Naive thymus-derived CD4-positive, alpha-beta T cell (primary cell): ENCODE measurements at regions of chr11 and their contacts with region 1.

Region 1: GRCh38 chr11:111766093-111766833 is at the start of gene PPP2R1B:
- DNase-seq: peak; percentile 50 to 78 (median 69)
- ATAC-seq: peak; percentile 98
- H3K4me3 ChIP-seq: peak within 1 kb of the TSS; percentile 95
- H3K4me3 Mint-ChIP-seq: peak within 1 kb of the TSS; percentile 94 to 100 (median 98)
- H3K27ac ChIP-seq: peak within 1 kb of the TSS; percentile 86
- H3K27ac Mint-ChIP-seq: peak within 1 kb of the TSS; percentile 83 to 99 (median 95)
- H3K4me1 ChIP-seq: peaks cover 7% of the 10 kb centered on the region in 2 donors
- H3K4me1 Mint-ChIP-seq: peaks cover 25 to 48% (median 38%) of the 10 kb centered on the region in 7 donors
- H3K27me3 ChIP-seq: no peaks in the 10 kb centered on the region
- H3K27me3 Mint-ChIP-seq: no peaks in the 10 kb centered on the region
- total RNA-seq, gene PPP2R1B: 25.8 to 49.2 (median 34.0) TPM

Region 2: GRCh38 chr11:111777094-111778046 is 11.1 kb after region 1 on chr11:
- CTCF ChIA-PET with region 1: interaction called, 31 read pairs
- POLR2A ChIA-PET with region 1: interaction called, 5 read pairs
- intact Hi-C with region 1: loop called in 1 of 2 experiments (anchors 1 kb)
- DNase-seq: peak in 7 of 9 donors; percentile 43 to 71 (median 57)
- ATAC-seq: peak; percentile 89
- H3K4me3 ChIP-seq: no peak overlapping the region
- H3K4me3 Mint-ChIP-seq: no peak overlapping the region
- H3K27ac ChIP-seq: no peak overlapping the region
- H3K27ac Mint-ChIP-seq: no peak overlapping the region
- H3K4me1 ChIP-seq: no peaks in the 10 kb centered on the region
- H3K4me1 Mint-ChIP-seq: no peaks in the 10 kb centered on the region
- H3K27me3 ChIP-seq: no peaks in the 10 kb centered on the region
- H3K27me3 Mint-ChIP-seq: no peaks in the 10 kb centered on the region

Region 3: DNA sequence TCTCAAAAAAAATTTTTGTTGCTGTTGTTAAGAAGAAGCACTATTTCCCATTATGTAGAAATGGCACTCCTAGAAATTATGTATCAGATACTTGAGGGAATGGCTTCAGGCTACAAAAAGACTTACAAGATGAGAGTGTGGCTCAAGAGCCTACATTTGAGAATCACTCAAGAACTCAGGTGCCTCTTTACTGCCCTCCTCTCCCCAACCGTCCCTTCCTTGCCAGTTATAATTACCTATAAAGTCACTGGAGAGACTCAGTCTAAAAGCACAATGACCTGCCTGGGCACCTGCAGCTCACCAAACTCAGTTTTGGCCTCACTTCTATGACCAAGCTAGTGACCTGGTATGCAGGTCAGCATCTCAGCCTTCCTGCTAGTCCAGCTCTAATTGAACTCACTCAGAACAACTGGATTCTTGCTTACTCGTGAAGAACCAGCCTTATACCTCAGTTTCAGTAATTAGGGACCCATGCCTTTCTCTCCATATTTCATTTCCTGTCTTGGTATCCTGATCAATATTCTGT is 41.9 kb after region 1 on chr11:
- CTCF ChIA-PET with region 1: no interaction called
- POLR2A ChIA-PET with region 1: no interaction called
- intact Hi-C with region 1: no loop called
- DNase-seq: no peak
- ATAC-seq: no peak
- H3K4me3 ChIP-seq: no peak overlapping the region
- H3K4me3 Mint-ChIP-seq: no peak overlapping the region
- H3K27ac ChIP-seq: no peak overlapping the region
- H3K27ac Mint-ChIP-seq: peak overlapping the region in 3 of 9 donors; percentile 19 to 66 (median 48)
- H3K4me1 ChIP-seq: no peaks in the 10 kb centered on the region
- H3K4me1 Mint-ChIP-seq: peaks cover 0 to 6% (median 0%) of the 10 kb centered on the region in 7 donors
- H3K27me3 ChIP-seq: no peaks in the 10 kb centered on the region
- H3K27me3 Mint-ChIP-seq: no peaks in the 10 kb centered on the region

Region 4: DNA sequence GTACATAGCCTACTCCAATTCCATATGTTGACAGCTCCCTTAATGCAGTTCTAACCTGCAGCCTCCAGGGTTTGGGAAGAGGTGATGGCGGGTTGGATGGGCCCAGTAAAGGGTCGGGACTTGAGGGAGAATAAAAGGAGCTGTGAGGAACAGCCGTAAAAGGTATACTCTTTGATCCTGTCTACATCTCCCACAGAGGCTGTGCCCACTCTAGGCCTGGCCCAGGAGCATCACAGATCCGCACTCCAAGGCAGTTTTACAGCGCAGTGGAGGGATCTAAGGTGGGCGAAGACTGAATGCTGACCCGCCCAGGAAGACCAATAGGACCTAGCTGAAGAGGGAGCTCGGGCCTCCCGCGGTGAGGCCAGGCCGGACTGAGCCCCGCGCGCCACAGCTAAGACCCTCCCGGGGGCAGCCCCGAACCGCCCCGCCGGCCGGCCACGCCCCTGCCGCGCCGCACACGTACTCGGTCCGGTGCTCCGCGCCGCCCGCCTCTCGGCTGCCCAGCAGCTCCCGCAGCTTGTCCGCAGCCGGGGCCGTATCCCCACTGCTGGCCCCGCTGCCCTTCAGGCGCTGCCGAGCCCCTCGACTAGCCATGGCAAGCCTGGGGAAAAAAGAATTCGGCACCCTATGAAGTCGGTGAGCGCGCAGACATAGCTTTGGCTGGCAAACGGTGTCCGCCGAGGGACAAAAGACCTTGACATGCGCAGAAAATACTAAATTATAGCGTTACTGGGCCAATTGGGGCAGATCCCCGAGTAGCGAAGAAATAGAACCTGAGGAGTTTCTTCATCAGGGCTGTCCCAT is 104.8 kb after region 1 on chr11 and contains the start of gene ALG9:
- CTCF ChIA-PET with region 1: no interaction called
- POLR2A ChIA-PET with region 1: interaction called, 5 read pairs
- intact Hi-C with region 1: loop called (anchors 2 kb)
- DNase-seq: peak; percentile 79 to 94 (median 88)
- ATAC-seq: peak; percentile 91
- H3K4me3 ChIP-seq: peak within 1 kb of the TSS; percentile 74
- H3K4me3 Mint-ChIP-seq: peak within 1 kb of the TSS; percentile 86 to 96 (median 93)
- H3K27ac ChIP-seq: peak within 1 kb of the TSS; percentile 91
- H3K27ac Mint-ChIP-seq: peak within 1 kb of the TSS; percentile 87 to 98 (median 94)
- H3K4me1 ChIP-seq: peaks cover 8 to 10% of the 10 kb centered on the region in 2 donors
- H3K4me1 Mint-ChIP-seq: peaks cover 9 to 41% (median 34%) of the 10 kb centered on the region in 7 donors
- H3K27me3 ChIP-seq: no peaks in the 10 kb centered on the region
- H3K27me3 Mint-ChIP-seq: no peaks in the 10 kb centered on the region
- total RNA-seq, gene ALG9: 16.4 to 30.2 (median 29.2) TPM

Region 5: DNA sequence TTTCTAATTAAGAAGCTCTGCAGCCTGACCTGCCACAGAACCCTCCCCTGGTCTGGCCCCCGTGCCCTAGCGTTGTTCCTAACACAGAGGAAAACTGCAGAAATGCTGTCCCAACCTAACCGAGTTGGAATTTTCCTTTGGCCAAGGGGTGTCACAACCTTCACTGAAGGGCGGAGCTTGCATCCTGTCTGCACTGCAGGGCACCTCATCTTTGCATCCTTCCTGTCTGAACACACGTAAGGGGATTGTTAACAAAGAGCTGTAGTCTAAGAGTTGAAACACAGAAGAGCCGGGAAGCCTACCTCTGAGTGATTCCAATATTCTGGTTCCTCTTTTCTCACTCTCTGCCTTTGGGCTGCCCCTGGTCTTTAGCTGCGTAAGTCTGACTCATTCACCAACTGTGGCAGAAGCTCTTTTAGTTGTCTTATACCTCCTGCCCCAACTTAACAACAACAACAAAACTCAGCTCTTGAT is 172.5 kb after region 1 on chr11:
- CTCF ChIA-PET with region 1: no interaction called
- POLR2A ChIA-PET with region 1: no interaction called
- intact Hi-C with region 1: loop called in 1 of 2 experiments (anchors 5 kb)
- DNase-seq: peak in 6 of 9 donors; percentile 18 to 38 (median 27)
- ATAC-seq: peak; percentile 73
- H3K4me3 ChIP-seq: no peak overlapping the region
- H3K4me3 Mint-ChIP-seq: peak overlapping the region; percentile 59 to 95 (median 78)
- H3K27ac ChIP-seq: peak overlapping the region; percentile 49
- H3K27ac Mint-ChIP-seq: peak overlapping the region; percentile 67 to 96 (median 84)
- H3K4me1 ChIP-seq: peaks cover 4 to 29% of the 10 kb centered on the region in 2 donors
- H3K4me1 Mint-ChIP-seq: peaks cover 16 to 48% (median 32%) of the 10 kb centered on the region in 7 donors
- H3K27me3 ChIP-seq: no peaks in the 10 kb centered on the region
- H3K27me3 Mint-ChIP-seq: no peaks in the 10 kb centered on the region

Region 6: GRCh38 chr11:112086422-112087191 is 320.3 kb after region 1 on chr11 and contains the starts of genes SDHD and TIMM8B:
- CTCF ChIA-PET with region 1: no interaction called
- POLR2A ChIA-PET with region 1: interaction called, 4 read pairs
- intact Hi-C with region 1: loop called (anchors 2 to 10 kb)
- DNase-seq: peak; percentile 90 to 98 (median 97)
- ATAC-seq: peak; percentile 94
- H3K4me3 ChIP-seq: peak within 1 kb of the TSS; percentile 99
- H3K4me3 Mint-ChIP-seq: peak within 1 kb of the TSS; percentile 90 to 100 (median 98)
- H3K27ac ChIP-seq: peak within 1 kb of the TSS; percentile 76
- H3K27ac Mint-ChIP-seq: peak within 1 kb of the TSS; percentile 92 to 99 (median 96)
- H3K4me1 ChIP-seq: peaks cover 21 to 23% of the 10 kb centered on the region in 2 donors
- H3K4me1 Mint-ChIP-seq: peaks cover 44 to 69% (median 62%) of the 10 kb centered on the region in 7 donors
- H3K27me3 ChIP-seq: no peaks in the 10 kb centered on the region
- H3K27me3 Mint-ChIP-seq: peaks cover 0 to 2% (median 0%) of the 10 kb centered on the region in 5 donors
- total RNA-seq, gene SDHD: 39.6 to 84.4 (median 65.8) TPM
- total RNA-seq, gene TIMM8B: 15.5 to 61.1 (median 24.3) TPM